Dorsolateral prefrontal cortex (tissue), 120 donors: ENCODE measurements at regions of chr7 and their contacts with region 1.

Region 1: DNA sequence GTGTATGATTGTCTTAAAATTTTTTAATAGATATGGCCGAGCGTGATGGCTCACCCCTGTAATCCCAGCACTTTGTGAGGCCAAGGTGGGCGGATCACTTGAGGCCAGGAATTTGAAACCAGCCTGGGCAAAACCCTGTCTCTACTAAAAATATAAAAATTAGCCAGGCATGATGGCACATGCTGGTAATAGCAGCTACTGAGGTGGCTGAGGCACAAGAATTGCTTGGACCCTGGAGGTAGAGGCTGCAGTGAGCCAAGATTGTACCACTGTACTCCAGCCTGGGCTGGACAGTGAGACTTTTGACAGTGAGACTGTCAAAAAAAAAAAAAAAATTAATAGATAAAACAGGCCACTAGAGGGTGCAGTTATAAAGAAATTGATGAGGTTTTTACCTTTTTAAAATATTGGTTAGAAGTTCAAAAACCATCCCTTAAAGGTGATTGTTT is 20.5 kb downstream of the NOM1 start:
- DNase-seq: no peak
- H3K4me3 ChIP-seq: no peak overlapping the region
- H3K27ac ChIP-seq: no peak overlapping the region
- H3K27me3 ChIP-seq: no peaks in the 10 kb centered on the region
- CTCF ChIP-seq: peak in 55 of 56 donors; percentile 25 to 69 (median 51)

Region 2: GRCh38 chr7:157224627-157225026 is 254.6 kb after region 1 on chr7:
- intact Hi-C with region 1: loop called in 1 of 2 experiments (anchors 5 kb)
- DNase-seq: no peak
- H3K4me3 ChIP-seq: no peak overlapping the region
- H3K27ac ChIP-seq: no peak overlapping the region
- H3K27me3 ChIP-seq: no peaks in the 10 kb centered on the region
- CTCF ChIP-seq: peak in 52 of 56 donors; percentile 22 to 70 (median 44)

Region 3: GRCh38 chr7:157273208-157274093 is 303.5 kb after region 1 on chr7:
- intact Hi-C with region 1: loop called in 1 of 2 experiments (anchors 5 kb)
- DNase-seq: peak in 8 of 10 donors; percentile 38 to 74 (median 55)
- H3K4me3 ChIP-seq: peak overlapping the region in 8 of 59 donors; percentile 4 to 31 (median 18)
- H3K27ac ChIP-seq: peak overlapping the region in 12 of 59 donors; percentile 1 to 80 (median 42)
- H3K27me3 ChIP-seq: peaks cover 0 to 8% (median 0%) of the 10 kb centered on the region in 45 donors
- CTCF ChIP-seq: peak; percentile 79 to 99 (median 96)